PC-3 (cell line): ENCODE measurements at regions of chr7 and their contacts with region 1.

Region 1: GRCh38 chr7:100342765-100343164 is 15.2 kb upstream of the PILRB start:
- DNase-seq: no peak
- ATAC-seq: no peak
- H3K4me3 ChIP-seq: no peak overlapping the region
- H3K27ac ChIP-seq: no peak overlapping the region
- H3K4me1 ChIP-seq: peaks cover 9% of the 10 kb centered on the region; the same call in 1 of the 2 replicates
- H3K27me3 ChIP-seq: no peaks in the 10 kb centered on the region
- CTCF ChIP-seq: no peak

Region 2: DNA sequence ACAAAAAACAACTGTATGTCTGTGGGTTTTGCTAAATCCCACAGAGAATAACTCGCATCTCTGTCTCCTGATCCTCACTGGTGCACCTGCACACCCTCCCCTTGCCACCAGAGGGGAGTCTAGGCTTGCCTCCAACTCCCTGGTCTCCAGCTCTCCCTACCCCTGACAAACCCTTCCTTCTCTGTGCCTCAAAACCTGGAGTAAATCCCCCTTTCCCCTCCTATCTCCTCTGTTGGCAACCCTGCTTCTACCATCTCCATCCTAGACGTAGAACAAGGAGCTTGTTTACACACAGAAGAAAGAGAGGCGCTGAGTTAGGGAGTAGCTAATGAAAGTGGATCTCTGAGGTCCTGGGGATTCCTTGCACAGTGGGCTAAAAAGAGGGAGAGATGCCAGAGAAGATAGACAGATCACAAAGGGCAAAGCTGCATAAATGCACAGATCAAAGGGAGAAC is 210.0 kb before region 1 on chr7:
- CTCF ChIA-PET with region 1: no interaction called
- POLR2A ChIA-PET with region 1: no interaction called
- intact Hi-C with region 1: loop called (anchors 5 kb)
- DNase-seq: peak; percentile 68
- ATAC-seq: peak; percentile 80
- H3K4me3 ChIP-seq: no peak overlapping the region
- H3K27ac ChIP-seq: no peak overlapping the region
- H3K4me1 ChIP-seq: 0 out of 2 replicates have a peak, but pooled peaks cover 4% of the 10 kb centered on the region
- H3K27me3 ChIP-seq: no peaks in the 10 kb centered on the region
- CTCF ChIP-seq: peak; percentile 87

Region 3: DNA sequence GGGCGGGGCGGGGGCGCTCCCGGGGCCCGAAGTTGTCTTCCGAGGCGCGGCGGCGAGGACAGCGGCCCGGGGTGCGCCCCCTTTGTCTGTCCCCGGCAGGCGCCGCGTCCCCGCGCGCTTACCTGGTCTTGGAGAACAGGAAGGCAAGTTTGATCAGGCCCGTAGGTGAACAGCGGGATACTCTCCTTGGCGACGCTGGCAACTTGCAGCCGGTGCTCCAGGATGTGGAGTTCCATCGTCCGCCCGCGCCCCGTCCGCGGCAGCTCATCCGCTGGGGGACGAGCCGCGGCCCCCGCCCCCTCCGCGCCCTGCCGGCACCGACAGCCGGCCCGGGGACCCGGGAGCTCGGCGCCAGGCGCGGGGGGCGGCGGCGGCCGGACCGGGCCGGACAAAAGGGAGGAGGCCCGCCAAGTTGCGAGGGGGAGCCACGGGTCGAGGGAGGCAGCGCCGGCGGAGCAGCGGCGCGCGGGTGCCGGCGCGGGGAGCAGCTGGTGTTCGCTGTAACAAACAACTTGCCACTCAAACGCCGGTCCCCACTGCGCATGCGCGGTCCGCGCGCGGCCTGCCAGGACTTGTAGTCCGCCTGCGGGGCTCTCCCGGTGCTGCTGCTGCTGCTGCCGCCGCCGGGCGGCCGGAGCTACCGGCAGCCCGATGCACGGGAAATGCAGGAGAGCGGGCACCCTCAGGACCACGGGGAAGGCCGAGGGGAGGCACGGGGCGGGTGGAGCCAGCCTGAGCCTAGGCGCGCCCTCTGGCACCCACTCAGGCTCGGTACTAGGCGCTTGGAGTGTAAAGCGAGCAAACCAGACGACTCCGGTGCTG is 70.8 kb before region 1 on chr7:
- CTCF ChIA-PET with region 1: no interaction called
- POLR2A ChIA-PET with region 1: no interaction called
- intact Hi-C with region 1: loop called (anchors 10 kb)
- DNase-seq: peak; percentile 93
- ATAC-seq: peak; percentile 77
- H3K4me3 ChIP-seq: peak overlapping the region; percentile 62
- H3K27ac ChIP-seq: no peak overlapping the region
- H3K4me1 ChIP-seq: 0 out of 2 replicates have a peak, but pooled peaks cover 12% of the 10 kb centered on the region
- H3K27me3 ChIP-seq: no peaks in the 10 kb centered on the region
- CTCF ChIP-seq: no peak

Region 4: GRCh38 chr7:100503345-100503725 is 160.6 kb after region 1 on chr7:
- CTCF ChIA-PET with region 1: no interaction called
- POLR2A ChIA-PET with region 1: no interaction called
- intact Hi-C with region 1: no loop called
- DNase-seq: no peak
- ATAC-seq: no peak
- H3K4me3 ChIP-seq: no peak overlapping the region
- H3K27ac ChIP-seq: no peak overlapping the region
- H3K4me1 ChIP-seq: no peaks in the 10 kb centered on the region
- H3K27me3 ChIP-seq: no peaks in the 10 kb centered on the region
- CTCF ChIP-seq: no peak